Activated CD4-positive, alpha-beta T cell treated with anti-CD3 and anti-CD28 coated beads, Interleukin-2, amount 10 ng/mL, durations not matched to agents 7 days and 5 days (primary cell): ENCODE measurements at regions of chr1 and their contacts with region 1.

Region 1: DNA sequence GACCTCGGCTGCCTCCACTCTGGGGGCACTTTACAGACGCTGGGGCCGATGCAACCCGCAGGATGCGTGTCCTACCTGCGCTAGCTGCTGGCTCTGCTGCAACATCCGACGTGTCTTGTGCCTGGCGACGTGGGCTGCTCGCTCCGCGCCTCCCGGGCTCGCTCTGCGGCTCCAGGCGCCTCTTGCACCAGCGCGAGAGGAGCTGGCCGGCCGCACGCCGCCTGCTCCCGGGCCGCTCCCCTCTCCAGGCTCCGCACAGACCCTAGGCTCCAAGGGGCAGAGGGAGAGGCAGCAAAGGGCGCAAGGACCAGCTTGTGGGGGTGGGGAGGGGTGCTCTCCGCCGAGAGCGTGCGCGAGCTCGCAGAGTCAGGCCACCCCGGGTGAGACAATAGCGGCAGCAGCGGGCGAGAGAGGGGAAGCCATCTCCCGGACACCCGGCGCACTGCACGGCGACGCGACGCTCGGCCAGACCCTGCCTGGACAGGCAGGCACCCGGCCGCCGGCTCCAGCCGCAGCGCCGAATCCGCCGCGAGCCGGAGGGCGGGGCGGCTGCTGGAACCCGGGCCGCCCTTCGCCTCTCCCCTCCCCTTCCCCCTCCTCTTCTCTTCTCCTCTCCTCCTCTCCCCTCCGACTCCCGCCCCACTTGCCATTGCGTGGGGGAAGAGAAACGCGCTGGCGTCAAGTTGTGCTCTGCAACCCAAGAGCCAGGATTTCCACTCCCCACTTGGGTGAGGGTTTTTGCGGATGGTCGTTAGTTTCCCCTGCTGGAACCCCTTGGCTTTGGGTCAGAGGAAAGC is at the start of gene PIK3C2B:
- DNase-seq: peak; percentile 76
- H3K4me3 Mint-ChIP-seq: peak within 1 kb of the TSS; percentile 88
- H3K27ac Mint-ChIP-seq: peak within 1 kb of the TSS; percentile 89
- H3K4me1 Mint-ChIP-seq: peaks cover 65% of the 10 kb centered on the region
- H3K27me3 Mint-ChIP-seq: no peaks in the 10 kb centered on the region
- total RNA-seq, gene PIK3C2B: 27.4 to 28.9 TPM

Region 2: GRCh38 chr1:203995228-203995627 is 499.3 kb before region 1 on chr1:
- CTCF ChIA-PET with region 1: no interaction called
- POLR2A ChIA-PET with region 1: no interaction called
- DNase-seq: no peak
- H3K4me3 Mint-ChIP-seq: no peak overlapping the region
- H3K27ac Mint-ChIP-seq: no peak overlapping the region
- H3K4me1 Mint-ChIP-seq: peaks cover 1% of the 10 kb centered on the region
- H3K27me3 Mint-ChIP-seq: peaks cover 8% of the 10 kb centered on the region

Region 3: GRCh38 chr1:204431310-204432165 is 62.9 kb before region 1 on chr1:
- CTCF ChIA-PET with region 1: interaction called, 57 read pairs
- POLR2A ChIA-PET with region 1: interaction called, 3 read pairs
- DNase-seq: peak; percentile 83
- H3K4me3 Mint-ChIP-seq: no peak overlapping the region
- H3K27ac Mint-ChIP-seq: no peak overlapping the region
- H3K4me1 Mint-ChIP-seq: no peaks in the 10 kb centered on the region
- H3K27me3 Mint-ChIP-seq: no peaks in the 10 kb centered on the region

Region 4: GRCh38 chr1:204438628-204439027 is 55.9 kb before region 1 on chr1:
- CTCF ChIA-PET with region 1: interaction called, 24 read pairs
- POLR2A ChIA-PET with region 1: interaction called, 3 read pairs
- DNase-seq: no peak
- H3K4me3 Mint-ChIP-seq: no peak overlapping the region
- H3K27ac Mint-ChIP-seq: no peak overlapping the region
- H3K4me1 Mint-ChIP-seq: peaks cover 2% of the 10 kb centered on the region
- H3K27me3 Mint-ChIP-seq: no peaks in the 10 kb centered on the region

Region 5: DNA sequence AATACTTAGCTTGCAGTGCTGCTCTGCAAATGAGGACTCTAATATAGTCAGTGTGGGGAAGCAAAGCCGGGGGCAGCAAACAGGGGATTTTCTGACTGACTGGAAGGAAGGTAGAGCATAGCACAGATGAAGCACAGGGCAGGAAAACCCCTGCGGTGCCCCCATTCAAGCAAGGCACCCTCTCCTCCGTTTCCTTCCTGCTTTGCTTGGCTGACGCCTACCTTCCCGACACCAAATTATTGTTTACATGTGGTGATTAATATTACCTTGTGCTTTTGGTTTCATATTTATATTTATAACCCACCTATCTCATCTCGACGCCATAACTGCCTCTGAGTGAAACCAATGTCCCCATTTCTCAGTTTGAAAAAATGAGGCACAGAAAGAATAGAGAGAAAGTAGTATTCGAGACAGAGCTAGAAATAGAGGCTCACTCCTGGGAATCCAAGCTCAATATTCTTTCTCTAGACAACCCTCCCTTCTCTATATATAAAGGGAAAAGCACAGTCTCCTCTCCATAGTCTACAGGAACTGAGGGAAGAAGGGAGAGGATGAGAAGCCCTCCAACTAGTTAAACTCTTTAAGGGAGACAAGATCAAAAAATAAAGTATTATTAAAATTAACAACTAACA is 41.2 kb before region 1 on chr1:
- CTCF ChIA-PET with region 1: interaction called, 12 read pairs
- POLR2A ChIA-PET with region 1: interaction called, 12 read pairs
- DNase-seq: peak; percentile 69
- H3K4me3 Mint-ChIP-seq: peak overlapping the region; percentile 26
- H3K27ac Mint-ChIP-seq: peak overlapping the region; percentile 87
- H3K4me1 Mint-ChIP-seq: peaks cover 44% of the 10 kb centered on the region
- H3K27me3 Mint-ChIP-seq: no peaks in the 10 kb centered on the region

Region 6: DNA sequence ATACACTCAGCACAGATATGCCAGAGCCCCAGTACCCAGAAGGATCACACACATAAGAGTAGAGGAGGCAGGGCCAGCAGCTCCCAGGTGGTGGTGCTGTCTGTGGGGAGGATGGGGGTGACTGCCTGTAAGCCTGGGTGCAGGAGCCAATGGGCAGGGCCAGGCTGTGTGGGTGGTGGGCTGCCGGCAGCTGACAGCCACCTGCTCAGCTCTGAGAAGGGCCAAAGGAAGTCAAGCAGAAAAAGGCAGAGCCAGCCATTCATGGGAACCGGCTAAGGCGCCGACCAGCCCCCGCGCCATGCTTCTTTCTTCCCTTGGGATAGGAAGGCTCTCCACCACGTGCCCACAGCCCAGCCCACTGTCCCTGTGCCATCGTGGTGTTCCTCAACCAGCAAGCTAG is 14.0 kb before region 1 on chr1:
- CTCF ChIA-PET with region 1: interaction called, 23 read pairs
- POLR2A ChIA-PET with region 1: no interaction called
- DNase-seq: no peak
- H3K4me3 Mint-ChIP-seq: no peak overlapping the region
- H3K27ac Mint-ChIP-seq: no peak overlapping the region
- H3K4me1 Mint-ChIP-seq: peaks cover 26% of the 10 kb centered on the region
- H3K27me3 Mint-ChIP-seq: no peaks in the 10 kb centered on the region

Region 7: DNA sequence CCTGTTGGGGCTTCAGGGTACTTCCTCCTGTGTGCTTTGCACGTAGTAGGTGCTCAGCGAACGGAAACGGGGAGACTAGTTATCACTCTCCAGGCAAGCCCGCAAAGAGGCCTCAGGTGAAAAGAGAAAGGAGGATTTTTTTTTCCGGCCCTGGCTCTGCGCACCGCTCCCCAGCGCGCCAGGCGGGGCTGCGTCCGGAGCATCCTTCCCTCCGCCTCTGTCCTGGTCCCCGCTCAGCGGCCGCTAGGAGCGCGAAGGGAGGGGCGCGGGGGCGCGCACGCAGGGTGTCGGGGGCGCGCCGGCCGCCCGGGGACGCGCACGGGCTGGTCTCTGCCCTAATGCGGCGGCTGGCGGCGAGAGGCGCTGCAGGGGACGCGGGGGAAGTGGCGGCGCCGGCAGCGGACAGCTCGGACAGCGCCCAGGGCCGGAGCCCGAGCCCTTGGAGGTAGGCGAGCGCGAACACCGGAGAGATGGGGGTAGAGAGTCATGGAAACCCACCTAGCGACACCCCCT is 333.9 kb after region 1 on chr1:
- CTCF ChIA-PET with region 1: no interaction called
- POLR2A ChIA-PET with region 1: no interaction called
- DNase-seq: peak; percentile 12
- H3K4me3 Mint-ChIP-seq: no peak overlapping the region
- H3K27ac Mint-ChIP-seq: no peak overlapping the region
- H3K4me1 Mint-ChIP-seq: peaks cover 6% of the 10 kb centered on the region
- H3K27me3 Mint-ChIP-seq: peaks cover 42% of the 10 kb centered on the region